ENCODE measurements at regions of chr6 and their contacts with region 1.

Region 1: DNA sequence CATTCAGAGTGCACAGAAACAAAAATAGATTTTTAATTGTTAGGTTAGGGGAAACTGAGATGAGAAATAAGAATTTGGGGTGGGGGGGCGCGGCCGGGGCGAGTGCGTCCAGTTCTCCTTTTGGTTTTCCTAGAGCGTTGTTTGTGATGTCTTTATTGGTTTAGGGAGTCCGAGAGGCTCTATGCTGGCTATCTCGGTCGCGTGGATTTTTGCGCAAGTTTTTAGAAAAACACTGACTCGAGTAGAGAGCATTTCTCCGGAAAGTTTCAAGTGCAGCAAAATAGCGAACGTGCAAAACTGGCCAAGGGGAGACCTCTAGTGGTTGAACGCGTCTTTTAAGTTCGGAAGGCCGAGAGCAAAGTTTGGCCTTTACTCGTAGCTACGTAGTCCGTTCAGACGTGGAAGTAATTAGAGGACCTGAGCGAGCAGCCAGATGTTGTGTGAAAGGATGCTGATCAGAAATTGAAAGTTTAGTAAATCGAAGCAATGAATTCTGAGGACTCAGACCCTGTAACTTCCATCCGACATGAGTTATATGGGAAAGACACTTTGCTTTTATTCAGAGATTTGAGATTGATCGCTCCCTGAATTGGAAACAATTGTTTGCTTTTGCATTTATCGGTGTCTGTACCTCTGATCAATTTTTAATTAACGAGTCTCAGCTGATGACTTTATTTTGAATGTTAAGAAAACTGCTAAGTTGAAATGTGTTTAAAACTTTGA is 2.7 kb downstream of the L3MBTL3 start:
- DNase-seq: peak; percentile 79 to 96
- H3K4me3 ChIP-seq: peak overlapping the region; percentile 82 to 88 (median 87)
- H3K27ac ChIP-seq: peak overlapping the region; percentile 74 to 92 (median 88)
- H3K4me1 ChIP-seq: peaks cover 0 to 11% (median 8%) of the 10 kb centered on the region in 4 donors
- H3K27me3 ChIP-seq: no peaks in the 10 kb centered on the region
- CTCF ChIP-seq: peak in 5 of 7 experiments; percentile 51 to 82 (median 74)
- EP300 ChIP-seq: no peak
- POLR2A ChIP-seq: no peak

Region 2: GRCh38 chr6:129893640-129894039 is 127.4 kb before region 1 on chr6:
- intact Hi-C with region 1: loop called (anchors 10 kb)
- DNase-seq: peak in 1 of 2 donors; percentile 43
- H3K4me3 ChIP-seq: no peak overlapping the region
- H3K27ac ChIP-seq: no peak overlapping the region
- H3K4me1 ChIP-seq: no peaks in the 10 kb centered on the region
- H3K27me3 ChIP-seq: no peaks in the 10 kb centered on the region
- CTCF ChIP-seq: peak in 3 of 7 experiments; percentile 5 to 53 (median 37)
- EP300 ChIP-seq: no peak
- POLR2A ChIP-seq: no peak